ENCODE measurements at regions of chr5 and their contacts with region 1.

Region 1: DNA sequence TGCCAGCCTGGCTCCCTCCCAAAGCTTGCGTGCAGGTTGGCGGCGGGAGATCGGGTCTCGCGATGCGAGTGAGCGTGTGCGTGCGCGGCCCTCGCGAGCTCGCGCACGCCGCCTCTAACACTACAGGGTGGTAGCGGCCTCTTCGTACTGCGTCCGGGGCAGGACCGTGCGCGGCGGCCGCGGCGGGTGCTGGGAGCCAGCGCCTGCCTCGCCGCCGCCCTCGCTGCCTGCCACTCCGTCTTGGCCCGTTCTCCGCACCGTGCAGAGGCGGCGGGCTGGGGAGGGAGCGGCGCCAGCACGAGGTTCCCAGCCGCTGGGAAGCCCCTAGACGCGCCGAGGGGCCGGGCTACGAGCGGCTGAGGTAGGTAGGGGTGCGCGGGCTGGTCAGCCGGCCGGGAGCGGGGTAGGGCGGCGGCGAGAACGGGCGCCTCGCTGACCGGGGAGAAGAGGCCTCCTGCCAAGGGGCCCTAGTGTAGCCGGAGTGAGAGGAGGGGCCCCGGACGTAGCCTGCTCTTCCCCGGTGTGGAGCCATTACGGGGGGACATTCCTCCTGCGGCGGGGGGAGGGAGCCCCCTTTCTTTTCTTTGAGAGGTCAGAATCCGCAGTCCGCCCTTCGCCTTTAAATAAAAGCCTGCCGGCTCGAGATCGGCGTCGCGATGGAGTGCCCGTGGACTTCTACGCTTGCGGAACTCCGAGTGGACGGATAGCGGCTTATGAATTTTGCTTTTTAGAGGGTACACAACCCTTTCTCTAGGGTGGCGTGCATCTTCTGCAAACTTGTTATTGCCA is at the start of gene C5orf24:
- DNase-seq: peak; percentile 97
- H3K4me3 Mint-ChIP-seq: peak within 1 kb of the TSS; percentile 96
- H3K27ac Mint-ChIP-seq: peak within 1 kb of the TSS; percentile 98
- H3K4me1 Mint-ChIP-seq: peaks cover 25% of the 10 kb centered on the region
- H3K27me3 Mint-ChIP-seq: no peaks in the 10 kb centered on the region
- CTCF ChIP-seq: no peak
- total RNA-seq, gene C5orf24: 61.4 and 66.0 TPM in 2 replicates

Region 2: GRCh38 chr5:134240421-134240962 is 605.6 kb before region 1 on chr5:
- CTCF ChIA-PET with region 1: no interaction called
- POLR2A ChIA-PET with region 1: no interaction called
- intact Hi-C with region 1: no loop called
- DNase-seq: no peak
- H3K4me3 Mint-ChIP-seq: no peak overlapping the region
- H3K27ac Mint-ChIP-seq: no peak overlapping the region
- H3K4me1 Mint-ChIP-seq: peaks cover 7% of the 10 kb centered on the region
- H3K27me3 Mint-ChIP-seq: no peaks in the 10 kb centered on the region
- CTCF ChIP-seq: no peak

Region 3: GRCh38 chr5:134821841-134822240 is 24.2 kb before region 1 on chr5:
- CTCF ChIA-PET with region 1: interaction called, 3 read pairs
- POLR2A ChIA-PET with region 1: interaction called, 10 read pairs
- intact Hi-C with region 1: no loop called
- DNase-seq: no peak
- H3K4me3 Mint-ChIP-seq: no peak overlapping the region
- H3K27ac Mint-ChIP-seq: peak overlapping the region; percentile 8
- H3K4me1 Mint-ChIP-seq: no peaks in the 10 kb centered on the region
- H3K27me3 Mint-ChIP-seq: no peaks in the 10 kb centered on the region
- CTCF ChIP-seq: no peak

Region 4: GRCh38 chr5:134864707-134865106 is 18.7 kb after region 1 on chr5:
- CTCF ChIA-PET with region 1: interaction called, 4 read pairs
- POLR2A ChIA-PET with region 1: interaction called, 13 read pairs
- intact Hi-C with region 1: no loop called
- DNase-seq: no peak
- H3K4me3 Mint-ChIP-seq: no peak overlapping the region
- H3K27ac Mint-ChIP-seq: no peak overlapping the region
- H3K4me1 Mint-ChIP-seq: no peaks in the 10 kb centered on the region
- H3K27me3 Mint-ChIP-seq: no peaks in the 10 kb centered on the region
- CTCF ChIP-seq: no peak

Region 5: DNA sequence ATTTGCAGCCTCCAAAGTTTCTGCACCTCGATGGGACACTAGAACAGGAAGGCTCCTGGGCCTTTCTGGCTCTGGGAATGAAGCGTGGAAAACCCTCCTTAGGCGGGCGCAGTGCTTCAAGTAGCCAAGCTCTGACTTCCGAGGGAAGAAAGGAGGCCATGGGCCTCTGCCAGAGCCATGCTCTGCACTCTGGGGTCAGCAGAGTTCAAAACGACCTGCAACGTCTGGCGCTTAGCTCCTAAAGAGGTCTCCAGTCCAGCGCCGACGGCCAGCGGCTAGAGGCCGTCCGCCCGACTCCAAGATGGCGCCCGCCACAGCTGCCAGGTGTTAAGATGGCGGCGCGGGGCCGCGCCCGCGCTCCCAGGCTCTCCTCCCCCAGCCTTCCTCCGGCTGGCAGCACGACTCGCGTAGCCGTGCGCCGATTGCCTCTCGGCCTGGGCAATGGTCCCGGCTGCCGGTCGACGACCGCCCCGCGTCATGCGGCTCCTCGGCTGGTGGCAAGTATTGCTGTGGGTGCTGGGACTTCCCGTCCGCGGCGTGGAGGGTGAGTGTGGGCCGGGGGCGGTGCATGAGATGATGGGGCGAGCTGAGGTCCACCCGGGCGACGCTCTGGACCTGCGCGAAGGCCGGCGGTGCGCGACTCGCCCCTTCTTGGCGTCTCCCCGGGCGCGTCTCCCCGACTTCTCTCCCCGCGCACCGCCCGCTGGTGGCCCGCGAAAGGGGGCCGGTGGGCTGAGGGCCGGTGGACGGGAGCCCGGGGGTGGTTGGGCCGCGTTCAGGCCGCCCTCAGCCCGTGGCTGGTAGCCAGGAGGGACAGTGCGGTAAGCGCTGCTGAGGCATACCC is 28.2 kb after region 1 on chr5 and contains the start of gene TXNDC15:
- CTCF ChIA-PET with region 1: interaction called, 7 read pairs
- POLR2A ChIA-PET with region 1: interaction called, 18 read pairs
- intact Hi-C with region 1: no loop called
- DNase-seq: peak; percentile 87
- H3K4me3 Mint-ChIP-seq: peak within 1 kb of the TSS; percentile 98
- H3K27ac Mint-ChIP-seq: peak within 1 kb of the TSS; percentile 97
- H3K4me1 Mint-ChIP-seq: peaks cover 28% of the 10 kb centered on the region
- H3K27me3 Mint-ChIP-seq: no peaks in the 10 kb centered on the region
- CTCF ChIP-seq: no peak
- total RNA-seq, gene TXNDC15: 57.0 and 66.0 TPM in 2 replicates